ENCODE measurements at regions of chr1 and their contacts with region 1.

Region 1: DNA sequence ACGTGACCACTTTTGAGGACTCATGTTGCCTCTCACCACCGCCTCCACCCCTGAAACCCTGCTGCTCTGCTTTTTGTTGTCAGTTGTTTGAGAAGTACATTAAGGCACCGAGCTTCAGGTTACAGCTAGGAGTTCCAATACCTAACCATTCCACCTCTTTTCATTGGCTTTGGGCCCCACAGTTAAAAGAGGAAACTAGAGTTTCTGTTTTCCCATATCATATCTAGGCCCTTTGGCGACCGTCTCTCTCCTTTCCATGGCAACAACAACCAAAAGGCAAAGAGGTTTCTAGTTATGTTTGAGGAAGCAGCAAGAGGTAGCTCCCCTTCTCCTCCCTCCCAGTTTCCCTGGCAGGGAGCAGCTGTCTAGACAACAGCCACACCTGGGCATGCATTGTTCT is 5.9 kb downstream of the ANKRD35 start:
- DNase-seq: no peak
- H3K4me3 Mint-ChIP-seq: no peak overlapping the region
- H3K27ac Mint-ChIP-seq: no peak overlapping the region
- H3K4me1 Mint-ChIP-seq: peaks cover 6% of the 10 kb centered on the region
- H3K27me3 Mint-ChIP-seq: peaks cover 44% of the 10 kb centered on the region

Region 2: GRCh38 chr1:145845514-145846161 is 34.1 kb before region 1 on chr1 and contains the start of gene NUDT17:
- intact Hi-C with region 1: no loop called
- DNase-seq: peak; percentile 92
- H3K4me3 Mint-ChIP-seq: no peak within 1 kb of the TSS
- H3K27ac Mint-ChIP-seq: no peak within 1 kb of the TSS
- H3K4me1 Mint-ChIP-seq: peaks cover 9% of the 10 kb centered on the region
- H3K27me3 Mint-ChIP-seq: no peaks in the 10 kb centered on the region
- total RNA-seq, gene NUDT17: 2.5 and 3.4 TPM in 2 replicates

Region 3: GRCh38 chr1:145936247-145936646 is 56.5 kb after region 1 on chr1:
- intact Hi-C with region 1: loop called (anchors 2 kb)
- DNase-seq: no peak
- H3K4me3 Mint-ChIP-seq: no peak overlapping the region
- H3K27ac Mint-ChIP-seq: no peak overlapping the region
- H3K4me1 Mint-ChIP-seq: peaks cover 20% of the 10 kb centered on the region
- H3K27me3 Mint-ChIP-seq: no peaks in the 10 kb centered on the region

Measured in activated CD4-positive, alpha-beta T cell treated with anti-CD3 and anti-CD28 coated beads, Interleukin-2, amount 10 ng/mL, durations not matched to agents 24 days and 14 days (primary cell).